Activated T-helper 1 cell treated with anti-CD3 and anti-CD28 coated beads, Interleukin-12 subunit alpha, Interleukin-12 subunit beta, Interleukin-2, Interleukin-4 antibody, amounts not matched to agents 30 ng/mL and 10 ng/mL and 1 ng/mL, durations not matched to agents 14 hours and 24 hours and 36 hours (primary cell): ENCODE measurements at regions of chr7 and their contacts with region 1.

Region 1: GRCh38 chr7:45136106-45137060 is 21.2 kb upstream of the RAMP3 start:
- DNase-seq: peak; percentile 55
- H3K4me3 Mint-ChIP-seq: no peak overlapping the region
- H3K27ac Mint-ChIP-seq: no peak overlapping the region
- H3K4me1 Mint-ChIP-seq: peaks cover 19% of the 10 kb centered on the region
- H3K27me3 Mint-ChIP-seq: peaks cover 10% of the 10 kb centered on the region

Region 2: GRCh38 chr7:44587843-44588711 is 548.3 kb before region 1 on chr7:
- intact Hi-C with region 1: loop called (anchors 1 kb)
- DNase-seq: peak; percentile 42
- H3K4me3 Mint-ChIP-seq: no peak overlapping the region
- H3K27ac Mint-ChIP-seq: no peak overlapping the region
- H3K4me1 Mint-ChIP-seq: peaks cover 10% of the 10 kb centered on the region
- H3K27me3 Mint-ChIP-seq: peaks cover 3% of the 10 kb centered on the region

Region 3: GRCh38 chr7:44921607-44922359 is 214.6 kb before region 1 on chr7:
- intact Hi-C with region 1: loop called (anchors 1 kb)
- DNase-seq: peak; percentile 86
- H3K4me3 Mint-ChIP-seq: no peak overlapping the region
- H3K27ac Mint-ChIP-seq: peak overlapping the region; percentile 79
- H3K4me1 Mint-ChIP-seq: peaks cover 15% of the 10 kb centered on the region
- H3K27me3 Mint-ChIP-seq: peaks cover 7% of the 10 kb centered on the region

Region 4: DNA sequence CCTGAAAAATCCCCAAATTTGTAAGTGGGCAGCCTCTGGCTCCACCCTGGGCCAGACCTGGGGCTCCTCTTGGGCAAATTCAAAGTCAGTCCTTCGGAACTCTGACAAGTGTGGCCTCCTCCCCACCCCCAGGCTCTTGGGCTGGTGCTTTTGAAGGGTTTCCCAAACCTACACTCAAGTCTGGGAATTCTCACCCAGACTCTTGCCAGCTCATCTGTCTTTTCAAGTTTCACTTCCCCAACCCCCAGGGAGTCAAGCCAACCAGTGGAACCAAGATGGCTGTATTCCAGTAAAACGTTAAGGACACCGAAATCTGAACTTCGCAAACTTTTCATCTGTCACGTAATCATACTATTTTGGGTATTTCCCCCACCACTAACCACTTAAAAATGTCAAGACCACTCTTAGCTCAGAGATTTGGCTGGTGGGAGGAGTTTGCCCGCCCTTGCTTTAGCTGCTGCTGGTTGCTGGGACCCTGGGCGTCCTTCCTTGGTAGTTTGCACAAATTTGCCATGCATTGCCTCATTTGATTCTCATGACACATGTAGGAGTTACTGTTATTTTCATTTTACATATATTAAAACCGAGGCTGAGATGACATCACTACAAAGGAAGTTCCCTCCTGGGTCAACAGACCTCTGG is 155.9 kb before region 1 on chr7:
- intact Hi-C with region 1: loop called (anchors 1 kb)
- DNase-seq: peak; percentile 56
- H3K4me3 Mint-ChIP-seq: peak overlapping the region; percentile 98
- H3K27ac Mint-ChIP-seq: peak overlapping the region; percentile 98
- H3K4me1 Mint-ChIP-seq: peaks cover 78% of the 10 kb centered on the region
- H3K27me3 Mint-ChIP-seq: no peaks in the 10 kb centered on the region

Region 5: DNA sequence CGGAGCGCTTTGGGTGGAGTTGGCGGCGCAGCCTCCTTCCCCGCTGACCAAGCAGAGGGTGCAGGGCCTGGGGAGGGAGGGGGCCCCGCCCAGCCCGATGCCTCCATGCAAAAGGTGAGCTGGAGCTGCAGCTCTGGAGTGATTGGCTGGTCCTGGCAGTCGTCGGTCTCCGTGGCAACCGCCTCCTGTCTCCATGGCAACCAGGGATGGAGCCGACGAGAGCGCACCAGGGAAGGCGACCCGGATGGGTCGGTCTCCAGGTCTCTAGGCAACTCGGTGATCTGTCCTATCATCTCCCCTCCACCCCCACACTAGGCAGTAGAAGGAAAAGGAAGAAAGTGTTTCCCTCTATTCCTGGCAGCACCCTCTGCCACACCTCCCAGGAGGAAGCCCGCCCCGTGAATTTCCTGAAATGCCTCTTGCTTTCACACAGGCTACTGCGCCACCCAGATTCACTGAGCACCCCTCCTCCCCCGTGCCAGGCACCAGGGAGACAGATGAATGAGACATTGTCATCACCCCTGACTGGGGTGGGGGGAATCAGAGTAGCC is 47.0 kb before region 1 on chr7:
- intact Hi-C with region 1: loop called (anchors 1 kb)
- DNase-seq: peak; percentile 60
- H3K4me3 Mint-ChIP-seq: peak overlapping the region; percentile 73
- H3K27ac Mint-ChIP-seq: no peak overlapping the region
- H3K4me1 Mint-ChIP-seq: no peaks in the 10 kb centered on the region
- H3K27me3 Mint-ChIP-seq: peaks cover 36% of the 10 kb centered on the region

Region 6: GRCh38 chr7:45420843-45421495 is 284.6 kb after region 1 on chr7:
- intact Hi-C with region 1: no loop called
- DNase-seq: no peak
- H3K4me3 Mint-ChIP-seq: no peak overlapping the region
- H3K27ac Mint-ChIP-seq: no peak overlapping the region
- H3K4me1 Mint-ChIP-seq: no peaks in the 10 kb centered on the region
- H3K27me3 Mint-ChIP-seq: peaks cover 10% of the 10 kb centered on the region